H1 (cell line): ENCODE measurements at regions of chrX and their contacts with region 1.

Region 1: GRCh38 chrX:109856974-109857373 is 123.9 kb upstream of the ACSL4 start:
- DNase-seq: no peak
- H3K4me3 ChIP-seq: no peak overlapping the region
- H3K27ac ChIP-seq: no peak overlapping the region
- H3K4me1 ChIP-seq: no peaks in the 10 kb centered on the region
- H3K27me3 ChIP-seq: no peaks in the 10 kb centered on the region
- CTCF ChIP-seq: peak in 2 of 3 experiments; percentile 34 to 36; a peak in 2 of 4 replicates
- EP300 ChIP-seq: no peak
- POLR2A ChIP-seq: no peak
- RAD21 ChIP-seq: peak; percentile 57 to 60

Region 2: DNA sequence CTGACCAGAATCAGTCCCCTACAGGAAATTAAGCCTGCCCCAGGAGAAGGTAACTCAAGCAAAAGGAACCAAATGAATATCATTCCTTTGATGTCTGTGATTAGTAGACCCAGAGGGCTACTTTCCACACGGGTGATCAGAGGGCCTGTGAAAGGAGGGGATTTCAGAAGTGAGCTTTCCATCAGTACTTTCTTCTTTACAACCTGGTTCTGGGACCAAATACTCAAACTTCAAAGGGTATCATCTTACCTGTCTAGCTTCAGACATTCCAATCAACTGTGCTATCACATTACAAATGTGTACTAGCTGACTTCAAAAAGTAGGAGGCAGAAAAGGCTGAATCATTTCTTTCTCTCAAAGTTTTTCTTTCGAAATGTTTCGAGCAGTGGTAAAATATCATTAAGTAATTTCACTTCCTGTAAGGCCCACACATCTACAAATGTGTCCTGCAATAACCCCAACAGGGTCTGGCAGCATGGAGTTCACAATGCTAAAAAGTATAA is 147.8 kb before region 1 on chrX:
- CTCF ChIA-PET with region 1: interaction called, 28 read pairs
- POLR2A ChIA-PET with region 1: no interaction called
- DNase-seq: no peak
- H3K4me3 ChIP-seq: no peak overlapping the region
- H3K27ac ChIP-seq: no peak overlapping the region
- H3K4me1 ChIP-seq: no peaks in the 10 kb centered on the region
- H3K27me3 ChIP-seq: no peaks in the 10 kb centered on the region
- CTCF ChIP-seq: no peak
- EP300 ChIP-seq: no peak
- POLR2A ChIP-seq: no peak
- RAD21 ChIP-seq: no peak

Region 3: DNA sequence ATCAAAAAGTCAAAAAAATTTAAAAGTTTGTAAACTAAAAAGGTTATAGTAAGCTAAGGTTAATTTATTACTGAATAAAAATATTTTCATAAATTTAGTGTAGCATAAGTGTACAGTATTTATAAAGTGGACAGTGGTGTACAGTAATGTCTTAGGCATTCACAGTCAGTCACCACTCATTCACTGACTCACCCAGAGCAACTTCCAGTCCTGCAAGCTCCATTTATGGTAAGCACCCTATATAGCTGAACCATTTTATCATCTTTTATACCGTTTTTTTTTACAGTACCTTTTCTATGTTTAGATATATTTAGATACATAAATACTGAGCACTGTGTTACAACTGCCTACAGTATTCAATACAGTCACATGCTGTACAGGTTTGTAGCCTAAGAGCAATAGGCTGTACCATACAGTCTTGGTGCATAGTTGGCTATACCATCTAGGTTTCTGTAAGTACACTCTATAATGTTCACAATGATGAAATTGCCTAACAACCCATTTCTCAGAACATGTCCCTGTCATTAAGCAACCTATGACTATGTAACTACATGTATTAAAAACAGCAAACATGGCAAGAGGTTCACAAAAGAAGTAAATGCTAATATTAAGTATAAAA is 142.5 kb before region 1 on chrX:
- CTCF ChIA-PET with region 1: interaction called, 28 read pairs
- POLR2A ChIA-PET with region 1: no interaction called
- DNase-seq: no peak
- H3K4me3 ChIP-seq: no peak overlapping the region
- H3K27ac ChIP-seq: no peak overlapping the region
- H3K4me1 ChIP-seq: no peaks in the 10 kb centered on the region
- H3K27me3 ChIP-seq: no peaks in the 10 kb centered on the region
- CTCF ChIP-seq: no peak
- EP300 ChIP-seq: no peak
- POLR2A ChIP-seq: no peak
- RAD21 ChIP-seq: no peak

Region 4: GRCh38 chrX:109720947-109721346 is 136.0 kb before region 1 on chrX:
- CTCF ChIA-PET with region 1: interaction called, 17 read pairs
- POLR2A ChIA-PET with region 1: no interaction called
- DNase-seq: no peak
- H3K4me3 ChIP-seq: no peak overlapping the region
- H3K27ac ChIP-seq: no peak overlapping the region
- H3K4me1 ChIP-seq: no peaks in the 10 kb centered on the region
- H3K27me3 ChIP-seq: no peaks in the 10 kb centered on the region
- CTCF ChIP-seq: no peak
- EP300 ChIP-seq: no peak
- POLR2A ChIP-seq: no peak
- RAD21 ChIP-seq: no peak

Region 5: DNA sequence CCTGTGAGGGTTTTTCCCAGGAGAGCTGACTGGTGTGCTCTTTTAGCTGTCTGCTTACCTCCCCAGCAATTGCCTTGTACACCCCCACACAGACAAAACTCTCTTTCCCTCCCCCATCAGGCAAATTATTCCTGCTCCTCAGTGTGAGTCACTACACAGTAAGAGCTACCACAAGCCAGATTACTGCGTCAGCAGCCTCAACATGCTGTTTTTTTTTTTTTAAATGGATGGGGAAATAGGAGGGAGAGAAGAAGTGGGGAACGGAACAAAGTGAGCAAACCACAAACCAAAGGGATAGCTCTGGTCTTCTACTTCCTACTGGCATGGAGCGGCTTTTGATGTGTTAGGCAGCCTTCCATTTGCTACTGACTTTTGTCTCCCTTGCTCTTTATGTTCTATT is 16.4 kb before region 1 on chrX:
- CTCF ChIA-PET with region 1: interaction called, 17 read pairs
- POLR2A ChIA-PET with region 1: no interaction called
- DNase-seq: no peak
- H3K4me3 ChIP-seq: no peak overlapping the region
- H3K27ac ChIP-seq: no peak overlapping the region
- H3K4me1 ChIP-seq: peaks cover 0 to 4% (median 0%) of the 10 kb centered on the region in 4 experiments; a peak in 1 of 7 replicates
- H3K27me3 ChIP-seq: no peaks in the 10 kb centered on the region
- CTCF ChIP-seq: no peak
- EP300 ChIP-seq: no peak
- POLR2A ChIP-seq: no peak
- RAD21 ChIP-seq: no peak